Activated B cell treated with CpG ODN at 0.5 μM for 24 hours (primary cell): ENCODE measurements at regions of chr3 and their contacts with region 1.

Region 1: GRCh38 chr3:114223143-114223542 is 14.2 kb downstream of the ZNF80 start:
- DNase-seq: no peak
- ATAC-seq: peak; percentile 60
- H3K4me3 Mint-ChIP-seq: peak overlapping the region; percentile 44
- H3K27ac Mint-ChIP-seq: no peak overlapping the region
- H3K4me1 Mint-ChIP-seq: peaks cover 23% of the 10 kb centered on the region
- H3K27me3 Mint-ChIP-seq: no peaks in the 10 kb centered on the region
- CTCF ChIP-seq: no peak

Region 2: GRCh38 chr3:114207768-114208167 is 15.4 kb before region 1 on chr3:
- CTCF ChIA-PET with region 1: interaction called, 23 read pairs
- POLR2A ChIA-PET with region 1: interaction called, 148 read pairs
- intact Hi-C with region 1: no loop called
- DNase-seq: no peak
- ATAC-seq: peak; percentile 97
- H3K4me3 Mint-ChIP-seq: peak overlapping the region; percentile 20
- H3K27ac Mint-ChIP-seq: peak overlapping the region; percentile 74
- H3K4me1 Mint-ChIP-seq: peaks cover 38% of the 10 kb centered on the region
- H3K27me3 Mint-ChIP-seq: no peaks in the 10 kb centered on the region
- CTCF ChIP-seq: no peak

Region 3: DNA sequence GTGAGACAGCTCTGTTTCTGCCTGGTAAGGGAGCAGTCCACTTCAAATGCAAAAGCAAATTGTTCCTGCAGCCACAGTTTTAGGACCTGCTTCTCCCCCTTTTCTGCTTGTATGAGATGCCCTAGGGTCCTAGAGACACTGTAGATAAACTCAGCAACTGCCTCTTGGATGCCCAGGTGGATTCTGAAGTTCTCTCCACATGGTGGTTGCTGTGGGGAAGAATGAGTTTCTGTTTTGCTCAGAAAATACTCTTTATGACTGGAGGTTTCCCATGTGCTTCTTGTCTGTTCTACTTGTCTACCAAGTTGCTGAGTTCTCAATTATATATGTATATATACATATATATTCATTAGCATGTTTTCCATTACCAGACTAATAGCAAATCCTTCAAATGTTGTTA is 19.8 kb after region 1 on chr3:
- CTCF ChIA-PET with region 1: no interaction called
- POLR2A ChIA-PET with region 1: interaction called, 5 read pairs
- intact Hi-C with region 1: loop called (anchors 2 kb)
- DNase-seq: no peak
- ATAC-seq: peak; percentile 64
- H3K4me3 Mint-ChIP-seq: no peak overlapping the region
- H3K27ac Mint-ChIP-seq: no peak overlapping the region
- H3K4me1 Mint-ChIP-seq: peaks cover 25% of the 10 kb centered on the region
- H3K27me3 Mint-ChIP-seq: no peaks in the 10 kb centered on the region
- CTCF ChIP-seq: no peak